GM12878 (cell line): ENCODE measurements at regions of chr18 and their contacts with region 1.

Region 1: GRCh38 chr18:3593904-3594661 is 144.1 kb downstream of the TGIF1 start:
- DNase-seq: peak; percentile 81
- ATAC-seq: peak; percentile 72
- H3K4me3 ChIP-seq: peak overlapping the region; percentile 43; the same call in 1 of the 2 replicates
- H3K27ac ChIP-seq: peak overlapping the region; percentile 90
- H3K4me1 ChIP-seq: peaks cover 37% of the 10 kb centered on the region
- H3K27me3 ChIP-seq: no peaks in the 10 kb centered on the region
- CTCF ChIP-seq: peak; percentile 82 to 95 (median 83)
- EP300 ChIP-seq: peak in 1 of 2 experiments; percentile 53; a peak in 2 of 4 replicates
- POLR2A ChIP-seq: peak; percentile 81
- RAD21 ChIP-seq: peak; percentile 79

Region 2: GRCh38 chr18:3281456-3282400 is 312.4 kb before region 1 on chr18:
- CTCF ChIA-PET with region 1: interaction called, 18 read pairs
- POLR2A ChIA-PET with region 1: no interaction called
- RAD21 ChIA-PET with region 1: interaction called, 11 read pairs
- SMC1A ChIA-PET with region 1: interaction called, 12 read pairs
- in situ Hi-C with region 1: loop called (anchors 5 kb)
- intact Hi-C with region 1: loop called (anchors 2 kb)
- DNase-seq: no peak
- ATAC-seq: peak; percentile 69
- H3K4me3 ChIP-seq: no peak overlapping the region
- H3K27ac ChIP-seq: no peak overlapping the region
- H3K4me1 ChIP-seq: peaks cover 24% of the 10 kb centered on the region
- H3K27me3 ChIP-seq: no peaks in the 10 kb centered on the region
- CTCF ChIP-seq: peak; percentile 35 to 66 (median 46); a peak in 4 of 6 replicates
- EP300 ChIP-seq: no peak
- POLR2A ChIP-seq: no peak
- RAD21 ChIP-seq: peak; percentile 75

Region 3: DNA sequence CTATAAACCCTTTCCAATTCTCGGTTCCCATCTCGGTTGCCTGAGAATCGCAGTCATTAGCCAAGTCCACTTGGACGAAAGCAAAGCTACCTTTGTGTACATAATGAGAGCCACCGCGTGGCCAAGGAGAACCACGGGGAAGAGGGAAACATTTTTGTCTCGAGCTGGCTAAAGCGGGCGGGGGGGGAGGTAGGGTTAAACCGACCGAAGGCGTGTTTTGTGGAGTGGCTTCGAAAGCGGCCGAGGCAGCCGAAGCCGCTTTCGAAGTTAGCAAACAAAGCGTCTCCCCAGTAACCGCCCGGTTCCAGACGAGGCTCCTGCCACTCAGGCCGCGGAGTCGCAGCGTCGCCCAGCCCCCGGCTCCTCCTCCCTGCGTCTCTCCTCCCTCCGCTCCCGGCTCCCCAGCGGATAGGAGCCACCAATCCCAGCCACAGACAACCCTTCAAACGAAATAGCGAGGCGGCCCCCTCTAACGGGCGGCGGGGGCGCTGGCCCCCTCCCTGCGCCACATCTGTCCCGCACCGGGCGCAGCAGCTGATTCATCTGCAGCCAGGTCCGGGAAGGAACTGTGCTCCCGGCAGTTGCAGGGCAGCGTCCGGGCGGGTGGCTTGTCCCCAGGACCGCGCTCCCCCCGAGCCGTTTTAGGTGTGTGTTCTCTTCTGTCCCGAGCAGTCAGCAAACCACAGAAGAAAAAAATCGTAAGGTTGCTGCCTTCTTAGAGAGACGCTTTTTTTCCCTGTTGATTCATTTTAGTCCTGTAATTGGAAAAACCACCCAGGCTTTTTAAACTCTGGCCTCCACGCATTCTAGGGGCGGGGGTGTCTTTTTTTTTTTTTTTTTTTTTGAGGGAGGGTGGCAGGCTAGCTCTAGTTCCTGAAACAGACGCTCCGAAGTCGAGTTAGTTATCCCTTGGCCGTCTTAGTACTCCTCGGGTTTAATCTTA is 145.9 kb before region 1 on chr18:
- CTCF ChIA-PET with region 1: interaction called, 60 read pairs
- POLR2A ChIA-PET with region 1: no interaction called
- RAD21 ChIA-PET with region 1: interaction called, 19 read pairs
- SMC1A ChIA-PET with region 1: interaction called, 43 read pairs
- in situ Hi-C with region 1: loop called (anchors 5 kb)
- intact Hi-C with region 1: loop called (anchors 1 kb)
- DNase-seq: peak; percentile 19
- ATAC-seq: peak; percentile 76
- H3K4me3 ChIP-seq: peak overlapping the region; percentile 82
- H3K27ac ChIP-seq: peak overlapping the region; percentile 73
- H3K4me1 ChIP-seq: peaks cover 19% of the 10 kb centered on the region
- H3K27me3 ChIP-seq: peaks cover 2 to 21% of the 10 kb centered on the region in 2 experiments
- CTCF ChIP-seq: 0 out of 6 replicates have a peak, but pooled peaks of 1 of the 3 experiments have one; percentile 14
- EP300 ChIP-seq: no peak
- POLR2A ChIP-seq: peak; percentile 71; the same call in 1 of the 2 replicates
- RAD21 ChIP-seq: peak; percentile 34; the same call in 1 of the 2 replicates

Region 4: DNA sequence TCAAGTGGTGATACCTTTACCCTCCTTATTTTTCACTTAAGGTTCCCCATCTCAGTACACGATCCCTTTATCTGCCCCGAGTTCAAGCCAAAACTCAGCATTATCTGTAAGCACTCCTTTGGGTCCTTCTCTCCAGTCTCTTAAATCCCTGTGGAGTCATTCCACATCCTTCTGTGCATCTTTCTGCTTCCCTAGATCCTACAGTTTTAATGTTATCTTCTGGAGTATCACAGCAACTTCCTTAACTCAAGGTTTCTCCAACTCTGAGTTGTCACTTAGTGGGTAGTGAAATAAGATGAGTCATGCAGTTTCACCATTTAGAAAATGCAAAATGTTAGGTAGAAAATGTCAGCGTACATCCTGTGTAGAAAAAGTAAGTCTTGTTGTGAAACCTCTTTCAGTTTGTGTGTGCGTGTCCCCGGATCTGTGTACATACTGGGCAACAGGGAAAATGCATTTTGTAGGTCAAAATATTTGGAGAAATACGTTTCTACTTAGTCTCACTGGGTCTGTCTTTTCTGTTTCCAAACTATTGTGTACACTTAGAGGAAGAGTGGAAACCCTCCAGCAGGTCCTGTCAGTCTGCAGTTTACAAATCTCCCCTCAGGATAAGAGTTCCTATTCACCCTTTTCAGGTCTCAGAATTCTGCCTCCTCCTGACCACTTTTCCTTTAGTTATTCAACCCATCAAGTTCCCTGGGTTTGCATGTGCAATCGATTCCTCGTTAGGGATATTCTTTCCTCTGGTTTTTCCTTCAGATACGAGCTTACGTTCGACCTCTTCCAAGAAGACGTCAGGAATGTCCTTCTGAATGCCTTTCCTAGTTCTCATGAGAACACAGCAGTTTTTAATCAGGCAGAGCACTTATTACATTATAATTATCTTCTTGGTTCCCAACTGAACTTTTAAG is 10.7 kb after region 1 on chr18:
- CTCF ChIA-PET with region 1: interaction called, 44 read pairs
- POLR2A ChIA-PET with region 1: interaction called, 5 read pairs
- RAD21 ChIA-PET with region 1: interaction called, 18 read pairs
- SMC1A ChIA-PET with region 1: interaction called, 36 read pairs
- in situ Hi-C with region 1: no loop called
- intact Hi-C with region 1: no loop called
- DNase-seq: peak; percentile 80
- ATAC-seq: peak; percentile 90
- H3K4me3 ChIP-seq: peak overlapping the region; percentile 57
- H3K27ac ChIP-seq: peak overlapping the region; percentile 80
- H3K4me1 ChIP-seq: peaks cover 25% of the 10 kb centered on the region
- H3K27me3 ChIP-seq: no peaks in the 10 kb centered on the region
- CTCF ChIP-seq: no peak
- EP300 ChIP-seq: peak; percentile 49 to 57; a peak in 2 of 4 replicates
- POLR2A ChIP-seq: 0 out of 2 replicates have a peak, but pooled peaks have one; percentile 32
- RAD21 ChIP-seq: no peak

Region 5: DNA sequence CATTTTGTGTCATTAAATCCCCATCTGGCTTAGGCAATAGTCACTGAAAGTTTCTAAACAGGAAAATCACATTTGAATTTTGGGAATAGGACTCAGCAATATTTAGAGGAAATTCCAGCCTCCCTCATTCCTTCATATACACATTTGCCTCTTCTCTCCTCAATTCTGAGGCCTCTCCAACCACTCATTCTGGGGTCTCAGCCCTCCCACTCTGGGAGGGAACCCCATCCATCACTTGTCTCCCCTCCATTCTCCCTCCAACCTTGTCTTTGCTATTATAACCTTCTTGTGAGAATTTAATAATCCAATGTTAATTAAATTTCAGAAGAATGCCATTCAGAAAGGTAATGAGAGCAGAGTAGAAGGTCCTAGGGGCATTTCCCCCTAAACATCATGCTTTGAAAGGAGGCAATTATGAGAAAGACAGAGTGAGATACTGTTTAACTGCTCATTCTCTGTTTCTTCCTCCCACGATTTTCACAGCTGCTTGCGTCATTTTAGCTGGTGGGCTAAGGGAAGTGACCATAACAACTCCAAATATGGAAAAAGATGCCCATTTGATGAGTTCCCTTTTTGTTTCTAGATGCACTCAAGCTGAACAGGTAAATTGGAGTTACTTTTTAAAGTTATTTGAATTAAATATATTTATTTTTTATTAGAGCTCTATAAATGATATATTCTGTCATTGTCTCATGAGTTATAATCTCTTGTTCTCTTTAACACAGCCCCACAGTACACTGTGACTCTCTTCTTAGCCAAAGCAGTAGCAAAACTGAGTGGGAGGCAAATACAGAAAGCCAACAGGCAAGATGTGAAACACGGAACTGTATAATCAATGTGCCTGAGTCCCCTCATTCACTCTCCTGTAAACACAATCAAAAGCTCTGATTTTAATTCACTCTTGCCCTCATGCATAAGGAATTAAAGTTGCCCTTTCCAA is 725.9 kb after region 1 on chr18:
- CTCF ChIA-PET with region 1: no interaction called
- POLR2A ChIA-PET with region 1: no interaction called
- RAD21 ChIA-PET with region 1: no interaction called
- SMC1A ChIA-PET with region 1: no interaction called
- in situ Hi-C with region 1: no loop called
- intact Hi-C with region 1: no loop called
- DNase-seq: peak; percentile 64
- ATAC-seq: peak; percentile 91
- H3K4me3 ChIP-seq: no peak overlapping the region
- H3K27ac ChIP-seq: no peak overlapping the region; the same call in 1 of the 2 replicates
- H3K4me1 ChIP-seq: no peaks in the 10 kb centered on the region
- H3K27me3 ChIP-seq: no peaks in the 10 kb centered on the region
- CTCF ChIP-seq: no peak
- EP300 ChIP-seq: peak; percentile 88 to 90; a peak in 3 of 4 replicates
- POLR2A ChIP-seq: no peak
- RAD21 ChIP-seq: no peak